Cardiac septum (tissue), 1 donor: ENCODE measurements at regions of chr18 and their contacts with region 1.

Region 1: GRCh38 chr18:46677611-46678010 is 20.6 kb upstream of the LOXHD1 start:
- DNase-seq: no peak

Region 2: DNA sequence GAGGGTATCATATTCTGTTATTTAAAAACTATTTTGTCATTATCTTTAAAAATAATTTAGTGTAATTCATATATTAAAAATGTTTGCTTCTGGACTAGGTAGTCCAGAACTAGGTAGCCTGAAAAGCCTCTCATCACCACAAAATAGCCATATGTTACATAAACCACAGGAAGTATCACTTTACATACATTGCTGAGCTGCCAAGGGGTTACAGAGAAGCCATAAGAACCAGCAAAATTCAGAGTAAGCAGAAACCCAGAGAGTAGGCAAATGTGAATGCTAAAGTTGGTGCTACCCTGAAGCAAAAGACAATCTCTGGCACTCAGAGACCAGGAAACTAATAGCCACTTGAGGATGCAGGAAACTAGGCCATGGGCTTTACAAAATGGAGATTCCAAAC is 81.5 kb before region 1 on chr18:
- intact Hi-C with region 1: no loop called
- DNase-seq: no peak

Region 3: DNA sequence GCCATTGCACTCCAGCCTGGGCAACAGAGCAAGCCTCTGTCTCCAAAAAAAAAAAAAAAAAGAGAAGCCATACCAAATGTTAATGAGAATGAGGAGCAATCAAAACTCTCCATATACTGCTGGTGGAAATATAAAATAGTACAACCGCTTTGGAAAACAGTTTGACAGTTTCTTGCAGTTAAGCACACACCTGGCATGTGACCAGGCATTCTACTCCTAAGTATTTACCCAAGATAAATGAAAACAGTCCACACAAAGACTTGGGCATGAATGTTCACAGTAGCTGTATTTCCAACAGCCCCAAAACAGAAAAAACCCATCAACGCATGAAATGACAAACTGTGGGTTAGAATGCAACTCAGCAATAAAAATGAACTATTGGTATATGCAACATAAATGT is 155.2 kb after region 1 on chr18:
- intact Hi-C with region 1: loop called (anchors 5 kb)
- DNase-seq: no peak